Stomach (tissue), 19 donors: ENCODE measurements at regions of chr2 and their contacts with region 1.

Region 1: GRCh38 chr2:218832520-218832919 is 917 bp upstream of the PRKAG3 start:
- DNase-seq: no peak
- H3K4me3 ChIP-seq: no peak overlapping the region
- H3K27ac ChIP-seq: peak overlapping the region in 2 of 5 donors; percentile 11 to 15
- H3K4me1 ChIP-seq: peaks cover 0 to 11% (median 3%) of the 10 kb centered on the region in 4 donors
- H3K27me3 ChIP-seq: peaks cover 0 to 66% (median 0%) of the 10 kb centered on the region in 3 donors
- CTCF ChIP-seq: no peak
- EP300 ChIP-seq: no peak
- POLR2A ChIP-seq: no peak

Region 2: DNA sequence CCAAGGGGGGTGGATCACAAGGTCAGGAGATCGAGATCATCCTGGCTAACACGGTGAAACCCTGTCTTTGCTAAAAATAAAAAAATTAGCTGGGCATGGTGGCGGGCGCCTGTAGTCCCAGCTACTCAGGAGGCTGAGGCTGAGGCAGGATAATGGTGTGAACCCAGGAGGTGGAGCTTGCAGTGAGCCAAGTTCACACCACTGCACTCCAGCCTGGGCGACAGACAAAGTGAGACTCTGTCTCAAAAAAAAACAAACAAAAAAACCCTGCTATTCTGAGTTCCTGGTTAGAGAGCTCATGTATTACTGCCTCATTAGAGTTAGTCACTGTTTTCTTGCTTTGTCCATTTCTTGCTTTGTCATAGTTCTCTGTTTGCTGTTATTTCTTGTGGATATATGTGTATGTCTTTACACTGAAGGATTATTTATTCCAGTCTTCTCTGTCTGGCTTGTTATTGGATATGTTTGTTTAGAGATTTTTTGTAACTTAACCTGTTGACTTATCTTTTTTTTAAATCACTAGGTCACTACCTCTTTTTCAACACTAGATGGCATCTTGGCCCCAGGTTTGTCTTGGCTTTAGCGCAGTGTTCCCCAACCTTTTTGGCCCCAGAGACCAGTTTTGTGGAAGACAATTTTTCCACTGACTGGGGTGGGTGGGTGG is 104.9 kb before region 1 on chr2:
- intact Hi-C with region 1: loop called (anchors 10 kb)
- DNase-seq: no peak
- H3K4me3 ChIP-seq: no peak overlapping the region
- H3K27ac ChIP-seq: no peak overlapping the region
- H3K4me1 ChIP-seq: peaks cover 8 to 33% (median 16%) of the 10 kb centered on the region in 4 donors
- H3K27me3 ChIP-seq: no peaks in the 10 kb centered on the region
- CTCF ChIP-seq: peak in 3 of 7 experiments; percentile 26 to 32 (median 30)
- EP300 ChIP-seq: no peak
- POLR2A ChIP-seq: no peak